ENCODE measurements at regions of chr6 and their contacts with region 1.

Region 1: GRCh38 chr6:159789377-159790148 is at the start of gene TCP1:
- DNase-seq: peak; percentile 99
- H3K4me3 Mint-ChIP-seq: peak within 1 kb of the TSS; percentile 96
- H3K27ac Mint-ChIP-seq: peak within 1 kb of the TSS; percentile 98
- H3K4me1 Mint-ChIP-seq: peaks cover 67% of the 10 kb centered on the region
- H3K27me3 Mint-ChIP-seq: no peaks in the 10 kb centered on the region
- total RNA-seq, gene TCP1: 454 and 457 TPM in 2 replicates

Region 2: DNA sequence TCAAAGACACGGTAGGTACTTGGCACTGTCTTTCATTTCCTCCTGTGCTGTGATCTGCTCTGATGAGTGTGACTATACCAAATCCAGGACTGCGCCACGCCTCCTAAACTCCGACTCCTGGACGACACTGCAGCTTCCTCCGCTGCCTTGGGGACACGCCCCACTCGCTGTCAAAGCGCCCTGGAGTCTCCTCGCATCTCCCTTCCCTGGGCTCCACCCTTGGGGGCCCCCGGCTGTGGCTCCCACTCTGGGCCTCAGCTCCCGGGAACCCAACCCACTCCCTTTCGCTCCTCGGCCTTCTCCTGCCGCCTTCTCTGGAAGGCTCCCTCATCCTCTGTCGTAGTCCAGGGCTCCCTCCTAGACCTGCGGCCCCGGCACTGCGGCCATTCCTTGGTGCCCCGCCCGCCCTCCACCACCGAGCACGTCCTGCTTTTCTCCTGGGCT is 850.7 kb before region 1 on chr6:
- intact Hi-C with region 1: no loop called
- DNase-seq: no peak
- H3K4me3 Mint-ChIP-seq: peak overlapping the region; percentile 45
- H3K27ac Mint-ChIP-seq: no peak overlapping the region
- H3K4me1 Mint-ChIP-seq: peaks cover 22% of the 10 kb centered on the region
- H3K27me3 Mint-ChIP-seq: peaks cover 13% of the 10 kb centered on the region

Region 3: GRCh38 chr6:159693128-159693893 is 96.3 kb before region 1 on chr6 and contains the start of gene SOD2:
- intact Hi-C with region 1: loop called (anchors 1 kb)
- DNase-seq: peak; percentile 75
- H3K4me3 Mint-ChIP-seq: peak within 1 kb of the TSS; percentile 94
- H3K27ac Mint-ChIP-seq: peak within 1 kb of the TSS; percentile 99
- H3K4me1 Mint-ChIP-seq: peaks cover 51% of the 10 kb centered on the region
- H3K27me3 Mint-ChIP-seq: no peaks in the 10 kb centered on the region
- total RNA-seq, gene SOD2: 78.3 and 81.0 TPM in 2 replicates

Region 4: DNA sequence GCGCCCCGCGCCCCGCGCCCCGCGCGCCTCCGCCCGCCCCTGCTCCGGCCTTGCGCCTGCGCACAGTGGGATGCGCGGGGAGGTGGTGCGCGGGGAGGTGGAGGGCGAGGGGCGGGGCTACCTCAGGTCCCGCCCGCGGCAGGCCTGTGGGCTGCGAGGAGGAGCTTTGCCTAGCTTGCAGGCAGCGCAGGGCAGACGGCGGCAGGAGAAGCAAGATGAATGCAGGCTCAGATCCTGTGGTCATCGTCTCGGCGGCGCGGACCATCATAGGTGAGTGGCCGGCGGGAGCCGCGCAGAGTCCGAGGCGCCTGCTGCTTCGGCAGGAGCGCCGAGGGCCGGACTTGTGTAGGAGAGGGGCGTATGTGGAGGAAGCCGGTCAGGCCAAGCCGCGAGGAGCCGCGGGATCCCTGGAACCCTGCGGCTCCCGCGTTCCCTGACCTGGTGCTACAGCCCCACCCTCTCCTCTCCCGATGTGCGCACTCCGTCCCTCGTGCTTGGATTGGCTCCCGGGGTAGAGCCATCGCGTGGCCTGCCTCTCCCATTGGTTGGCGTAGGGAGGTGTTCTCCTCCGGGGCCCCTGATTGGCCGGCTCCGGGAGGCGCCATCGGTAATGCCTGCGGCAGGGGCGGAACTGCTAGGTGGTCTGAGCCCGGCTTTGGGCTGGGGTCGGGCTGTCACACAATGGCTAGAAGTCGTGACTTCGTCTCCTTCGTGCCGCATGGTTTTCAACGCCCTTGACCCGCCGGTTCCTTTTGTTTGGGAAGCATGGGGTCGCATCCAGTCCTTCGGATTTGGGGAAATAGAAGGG is 27.5 kb before region 1 on chr6 and contains the start of gene ACAT2:
- intact Hi-C with region 1: loop called (anchors 1 kb)
- DNase-seq: peak; percentile 94
- H3K4me3 Mint-ChIP-seq: peak within 1 kb of the TSS; percentile 97
- H3K27ac Mint-ChIP-seq: peak within 1 kb of the TSS; percentile 93
- H3K4me1 Mint-ChIP-seq: peaks cover 45% of the 10 kb centered on the region
- H3K27me3 Mint-ChIP-seq: no peaks in the 10 kb centered on the region
- total RNA-seq, gene ACAT2: 83.1 and 84.2 TPM in 2 replicates

Region 5: GRCh38 chr6:159968440-159969203 is 179.1 kb after region 1 on chr6 and contains the start of gene IGF2R:
- intact Hi-C with region 1: loop called (anchors 1 kb)
- DNase-seq: peak; percentile 90
- H3K4me3 Mint-ChIP-seq: peak within 1 kb of the TSS; percentile 96
- H3K27ac Mint-ChIP-seq: peak within 1 kb of the TSS; percentile 93
- H3K4me1 Mint-ChIP-seq: peaks cover 34% of the 10 kb centered on the region
- H3K27me3 Mint-ChIP-seq: peaks cover 17% of the 10 kb centered on the region
- total RNA-seq, gene IGF2R: 118 and 126 TPM in 2 replicates

Region 6: GRCh38 chr6:160221423-160221822 is 431.9 kb after region 1 on chr6:
- intact Hi-C with region 1: loop called (anchors 10 kb)
- DNase-seq: no peak
- H3K4me3 Mint-ChIP-seq: no peak overlapping the region
- H3K27ac Mint-ChIP-seq: no peak overlapping the region
- H3K4me1 Mint-ChIP-seq: no peaks in the 10 kb centered on the region
- H3K27me3 Mint-ChIP-seq: no peaks in the 10 kb centered on the region